H1 (cell line): ENCODE measurements at regions of chr6 and their contacts with region 1.

Region 1: DNA sequence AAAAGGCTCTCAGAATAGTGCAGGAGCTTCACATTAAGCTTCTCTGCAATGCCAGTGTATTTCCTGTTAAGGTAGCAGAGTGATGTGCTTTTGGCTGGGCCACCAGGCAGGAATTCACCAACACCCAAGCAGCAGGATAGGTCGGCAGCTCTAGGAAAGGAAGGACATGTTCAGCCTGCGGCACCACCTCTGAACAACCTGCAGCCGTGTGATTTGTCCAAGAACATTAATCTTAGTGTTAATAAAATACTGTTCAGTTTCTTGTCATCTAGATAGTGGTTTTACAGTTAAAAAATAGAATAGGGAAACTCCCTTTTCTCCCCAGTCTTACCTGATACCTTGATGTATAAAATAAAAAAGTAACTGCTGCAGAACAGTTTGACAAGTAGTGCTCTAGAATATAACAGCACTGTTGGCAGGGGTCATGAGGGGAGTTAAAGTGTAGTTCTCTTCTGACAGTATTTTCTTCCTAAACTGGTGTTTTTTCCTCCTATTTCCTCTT is 18.8 kb downstream of the ZNF292 start:
- DNase-seq: no peak
- H3K4me3 ChIP-seq: no peak overlapping the region
- H3K27ac ChIP-seq: no peak overlapping the region
- H3K4me1 ChIP-seq: peaks cover 3 to 36% (median 12%) of the 10 kb centered on the region in 4 experiments
- H3K27me3 ChIP-seq: no peaks in the 10 kb centered on the region
- CTCF ChIP-seq: no peak
- EP300 ChIP-seq: no peak
- POLR2A ChIP-seq: no peak
- RAD21 ChIP-seq: no peak

Region 2: GRCh38 chr6:87078983-87079616 is 95.0 kb before region 1 on chr6:
- CTCF ChIA-PET with region 1: no interaction called
- POLR2A ChIA-PET with region 1: no interaction called
- DNase-seq: peak; percentile 51 to 88
- H3K4me3 ChIP-seq: no peak overlapping the region
- H3K27ac ChIP-seq: no peak overlapping the region
- H3K4me1 ChIP-seq: no peaks in the 10 kb centered on the region
- H3K27me3 ChIP-seq: no peaks in the 10 kb centered on the region
- CTCF ChIP-seq: peak; percentile 84 to 99 (median 97)
- EP300 ChIP-seq: no peak
- POLR2A ChIP-seq: no peak
- RAD21 ChIP-seq: peak; percentile 68 to 78

Region 3: GRCh38 chr6:87154993-87155841 is 18.9 kb before region 1 on chr6 and contains the start of gene ZNF292:
- CTCF ChIA-PET with region 1: interaction called, 3 read pairs
- POLR2A ChIA-PET with region 1: interaction called, 17 read pairs
- DNase-seq: peak; percentile 94 to 96
- H3K4me3 ChIP-seq: peak within 1 kb of the TSS; percentile 87 to 97 (median 95)
- H3K27ac ChIP-seq: peak within 1 kb of the TSS; percentile 97
- H3K4me1 ChIP-seq: peaks cover 0 to 8% (median 3%) of the 10 kb centered on the region in 4 experiments; a peak in 4 of 7 replicates
- H3K27me3 ChIP-seq: peaks cover 0 to 9% (median 4%) of the 10 kb centered on the region in 4 experiments; a peak in 3 of 7 replicates
- CTCF ChIP-seq: no peak
- EP300 ChIP-seq: no peak
- POLR2A ChIP-seq: peak; percentile 75 to 85
- RAD21 ChIP-seq: no peak
- total RNA-seq, gene ZNF292: 38.0 and 44.2 TPM in 2 replicates

Region 4: DNA sequence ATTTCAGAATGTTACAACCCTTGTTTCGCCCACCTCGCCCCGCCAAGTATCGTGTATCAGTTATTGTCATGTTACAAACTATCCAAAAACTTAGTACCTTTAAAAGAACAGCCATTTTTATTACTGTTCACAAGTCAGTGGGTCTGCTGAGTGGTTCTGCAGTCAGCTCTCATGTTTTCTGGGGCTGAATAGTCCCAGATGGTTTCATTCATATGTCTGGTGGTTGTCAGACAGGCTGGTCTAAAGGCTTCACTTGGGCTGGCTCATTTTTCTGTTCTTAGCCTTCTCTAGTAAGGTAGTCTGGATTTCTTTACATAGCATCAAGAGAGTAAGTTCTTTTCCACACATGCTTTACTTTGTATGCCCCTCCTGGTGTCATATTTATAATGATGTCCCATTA is 10.1 kb before region 1 on chr6:
- CTCF ChIA-PET with region 1: interaction called, 3 read pairs
- POLR2A ChIA-PET with region 1: interaction called, 16 read pairs
- DNase-seq: no peak
- H3K4me3 ChIP-seq: no peak overlapping the region
- H3K27ac ChIP-seq: no peak overlapping the region
- H3K4me1 ChIP-seq: peaks cover 0 to 15% (median 5%) of the 10 kb centered on the region in 4 experiments; a peak in 5 of 7 replicates
- H3K27me3 ChIP-seq: no peaks in the 10 kb centered on the region
- CTCF ChIP-seq: no peak
- EP300 ChIP-seq: no peak
- POLR2A ChIP-seq: no peak
- RAD21 ChIP-seq: no peak

Region 5: DNA sequence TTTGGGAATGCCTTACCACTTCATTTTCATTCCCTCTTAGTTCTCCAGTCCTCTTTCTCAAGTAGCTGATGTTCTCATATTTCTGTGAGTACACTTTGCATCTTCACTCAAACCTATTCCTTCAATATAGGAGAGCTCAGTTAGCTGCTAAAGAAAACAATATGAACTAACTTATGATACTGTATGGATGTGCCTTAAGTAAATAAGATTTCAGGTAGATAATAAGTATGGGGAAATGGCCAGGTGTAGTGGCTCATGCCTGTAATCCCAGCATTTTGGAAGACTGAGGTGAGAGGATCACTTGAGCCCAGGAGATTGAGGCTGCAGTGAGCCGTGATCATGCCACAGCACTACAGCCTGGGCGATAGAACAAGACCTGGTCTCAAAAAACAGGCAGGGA is 12.2 kb after region 1 on chr6:
- CTCF ChIA-PET with region 1: no interaction called
- POLR2A ChIA-PET with region 1: no interaction called
- DNase-seq: no peak
- H3K4me3 ChIP-seq: no peak overlapping the region
- H3K27ac ChIP-seq: no peak overlapping the region
- H3K4me1 ChIP-seq: peaks cover 0 to 8% (median 4%) of the 10 kb centered on the region in 4 experiments; a peak in 5 of 7 replicates
- H3K27me3 ChIP-seq: no peaks in the 10 kb centered on the region
- CTCF ChIP-seq: no peak
- EP300 ChIP-seq: no peak
- POLR2A ChIP-seq: no peak
- RAD21 ChIP-seq: no peak